ENCODE measurements at regions of chr12 and their contacts with region 1.

Region 1: GRCh38 chr12:4037747-4038312 is 164.6 kb upstream of the PARP11 start:
- DNase-seq: peak in 2 of 6 donors; percentile 44 to 75
- ATAC-seq: peak; percentile 70 to 80 (median 71)
- H3K4me3 ChIP-seq: no peak overlapping the region
- H3K27ac ChIP-seq: no peak overlapping the region
- H3K4me1 ChIP-seq: no peaks in the 10 kb centered on the region
- H3K27me3 ChIP-seq: no peaks in the 10 kb centered on the region
- CTCF ChIP-seq: peak; percentile 48 to 71 (median 64)

Region 2: GRCh38 chr12:3990501-3991280 is 47.1 kb before region 1 on chr12:
- intact Hi-C with region 1: loop called in 2 of 3 experiments (anchors 5 kb)
- DNase-seq: no peak
- ATAC-seq: no peak
- H3K4me3 ChIP-seq: no peak overlapping the region
- H3K27ac ChIP-seq: no peak overlapping the region
- H3K4me1 ChIP-seq: no peaks in the 10 kb centered on the region
- H3K27me3 ChIP-seq: no peaks in the 10 kb centered on the region
- CTCF ChIP-seq: no peak

Region 3: GRCh38 chr12:4001031-4001430 is 36.8 kb before region 1 on chr12:
- intact Hi-C with region 1: no loop called
- DNase-seq: no peak
- ATAC-seq: no peak
- H3K4me3 ChIP-seq: no peak overlapping the region
- H3K27ac ChIP-seq: peak overlapping the region; percentile 9 to 90 (median 80)
- H3K4me1 ChIP-seq: peaks cover 8 to 42% (median 25%) of the 10 kb centered on the region in 3 donors
- H3K27me3 ChIP-seq: no peaks in the 10 kb centered on the region
- CTCF ChIP-seq: no peak

Region 4: DNA sequence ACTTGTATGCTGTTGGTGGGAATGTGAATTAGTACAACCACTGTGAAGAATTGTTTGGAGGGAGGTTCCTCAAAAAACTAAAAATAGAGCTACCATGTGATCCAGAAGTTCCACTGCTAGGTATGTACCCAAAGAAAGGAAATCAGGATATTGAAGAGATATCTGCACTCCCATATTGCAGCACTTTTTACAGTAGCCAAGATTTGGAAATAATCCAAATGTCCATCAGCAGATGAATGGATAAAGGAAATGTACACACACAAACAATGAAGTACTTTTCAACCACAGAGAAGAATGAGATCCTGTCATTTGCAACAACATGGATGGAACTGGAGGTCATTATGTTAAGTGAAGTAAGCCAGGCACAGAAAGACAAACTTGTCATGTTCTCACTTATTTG is 309.1 kb after region 1 on chr12:
- intact Hi-C with region 1: no loop called
- DNase-seq: no peak
- ATAC-seq: no peak
- H3K4me3 ChIP-seq: no peak overlapping the region
- H3K27ac ChIP-seq: no peak overlapping the region
- H3K4me1 ChIP-seq: no peaks in the 10 kb centered on the region
- H3K27me3 ChIP-seq: no peaks in the 10 kb centered on the region
- CTCF ChIP-seq: no peak